Left ventricle myocardium superior (tissue), 1 donor: ENCODE measurements at regions of chr9 and their contacts with region 1.

Region 1: GRCh38 chr9:132507746-132508469 is 74.5 kb upstream of the BARHL1 start:
- DNase-seq: peak; percentile 67
- ATAC-seq: peak; percentile 72

Region 2: GRCh38 chr9:132560616-132561202 is 52.8 kb after region 1 on chr9:
- intact Hi-C with region 1: loop called (anchors 10 kb)
- DNase-seq: peak; percentile 22
- ATAC-seq: peak; percentile 43

Region 3: GRCh38 chr9:132800038-132800648 is 292.2 kb after region 1 on chr9:
- intact Hi-C with region 1: loop called (anchors 2 kb)
- DNase-seq: peak; percentile 89
- ATAC-seq: peak; percentile 80